ENCODE measurements at regions of chr6 and their contacts with region 1.

Region 1: GRCh38 chr6:136792410-136793262 is at the start of gene MAP3K5:
- DNase-seq: peak; percentile 92 to 98 (median 95)
- ATAC-seq: peak; percentile 80
- H3K4me3 ChIP-seq: peak within 1 kb of the TSS; percentile 98 to 99
- H3K4me3 Mint-ChIP-seq: peak within 1 kb of the TSS; percentile 94
- H3K27ac ChIP-seq: peak within 1 kb of the TSS; percentile 92 to 96
- H3K27ac Mint-ChIP-seq: peak within 1 kb of the TSS; percentile 96
- H3K4me1 ChIP-seq: peaks cover 36% of the 10 kb centered on the region
- H3K4me1 Mint-ChIP-seq: peaks cover 39% of the 10 kb centered on the region
- H3K27me3 ChIP-seq: no peaks in the 10 kb centered on the region
- H3K27me3 Mint-ChIP-seq: no peaks in the 10 kb centered on the region
- CTCF ChIP-seq: peak; percentile 72
- total RNA-seq, gene MAP3K5: 11.1 to 11.3 TPM

Region 2: DNA sequence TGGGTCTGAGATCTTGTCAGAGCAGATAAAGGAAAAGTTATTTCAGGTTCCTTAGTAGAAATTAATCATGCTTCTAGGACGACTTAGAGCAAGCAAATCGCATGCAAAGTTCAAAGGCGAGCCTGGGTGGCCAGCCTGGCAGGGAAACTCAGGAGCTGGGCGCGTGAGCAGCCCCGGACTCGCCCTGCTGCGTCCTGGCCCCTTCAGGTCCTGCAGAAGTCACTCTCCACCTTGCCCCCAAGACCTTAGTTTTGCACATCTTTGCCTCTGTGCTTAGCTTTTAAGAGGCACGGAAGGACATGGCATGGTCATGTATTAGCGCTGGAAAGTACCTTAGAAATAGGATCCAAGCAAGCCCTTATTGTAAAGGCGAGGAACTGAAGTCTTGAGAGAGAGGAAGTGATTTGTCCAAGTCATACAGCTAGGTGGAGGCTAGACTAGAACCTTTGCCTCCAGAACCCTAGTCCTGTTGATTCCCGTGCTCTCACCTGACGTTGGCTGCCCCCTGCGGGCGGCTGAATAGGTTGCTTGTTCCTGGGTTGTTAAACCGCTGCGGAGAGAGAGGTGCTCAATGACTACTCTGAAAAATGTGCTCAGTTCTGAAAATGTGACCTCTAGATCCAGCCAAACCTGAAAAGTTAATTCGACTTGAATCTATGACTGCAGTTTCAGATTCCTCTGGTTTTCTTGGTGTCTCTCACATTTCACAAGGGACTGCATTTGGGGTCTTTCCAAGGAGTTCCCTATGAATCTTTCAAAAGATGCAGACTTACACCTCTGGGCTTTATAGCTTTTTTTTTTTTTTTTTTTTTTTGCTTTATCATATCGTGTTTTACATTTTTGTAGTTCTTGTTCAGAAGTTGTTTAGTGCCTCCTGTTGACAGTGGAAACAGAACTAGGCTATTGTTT is 1608.8 kb before region 1 on chr6:
- CTCF ChIA-PET with region 1: no interaction called
- POLR2A ChIA-PET with region 1: no interaction called
- intact Hi-C with region 1: loop called in 1 of 2 experiments (anchors 5 kb)
- DNase-seq: peak; percentile 54 to 87 (median 75)
- ATAC-seq: peak; percentile 37
- H3K4me3 ChIP-seq: peak overlapping the region; percentile 52 to 58
- H3K4me3 Mint-ChIP-seq: peak overlapping the region; percentile 91
- H3K27ac ChIP-seq: peak overlapping the region in 1 of 2 experiments; percentile 41
- H3K27ac Mint-ChIP-seq: peak overlapping the region; percentile 84
- H3K4me1 ChIP-seq: peaks cover 9% of the 10 kb centered on the region
- H3K4me1 Mint-ChIP-seq: peaks cover 23% of the 10 kb centered on the region
- H3K27me3 ChIP-seq: no peaks in the 10 kb centered on the region
- H3K27me3 Mint-ChIP-seq: no peaks in the 10 kb centered on the region
- CTCF ChIP-seq: peak; percentile 70

Region 3: DNA sequence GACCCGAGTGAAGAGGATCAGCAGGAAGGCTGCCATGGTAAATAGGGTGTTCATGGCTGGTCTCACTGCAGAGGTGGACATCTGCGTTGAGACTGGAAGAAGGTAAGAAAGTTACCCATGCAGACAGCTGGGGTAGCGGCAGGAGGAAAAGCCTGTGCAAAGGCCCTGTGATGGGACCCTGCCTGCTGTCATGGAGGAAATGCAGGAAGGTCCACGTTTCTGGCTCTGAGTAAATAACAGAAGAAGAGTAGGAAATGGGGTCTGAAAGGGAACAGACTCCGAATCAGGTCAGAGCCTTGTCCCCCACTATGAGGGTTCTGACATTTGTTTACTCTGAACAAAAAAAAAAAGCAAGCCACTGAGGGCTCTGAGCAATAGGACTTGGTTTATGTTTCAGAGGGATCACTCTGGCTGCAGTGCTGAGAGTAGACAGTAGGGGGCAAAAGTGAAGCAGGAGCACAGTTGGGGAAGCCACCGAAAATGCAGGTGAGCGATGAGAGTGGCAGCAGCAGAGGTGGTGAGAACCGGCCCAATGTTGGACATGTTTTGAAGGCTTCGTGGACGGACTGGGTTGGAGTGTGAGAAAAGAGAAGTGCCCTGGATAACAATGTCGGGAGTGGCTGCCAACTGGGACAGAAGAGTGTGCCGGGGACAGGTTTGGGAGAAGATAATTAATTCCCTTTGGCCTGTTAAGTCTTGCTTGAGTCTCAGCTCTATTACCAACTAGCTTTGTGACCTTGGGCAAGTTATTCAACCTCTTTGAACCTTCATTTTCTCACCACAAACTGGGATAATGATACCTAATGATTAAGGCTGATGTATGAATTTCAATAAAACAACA is 184.5 kb before region 1 on chr6:
- CTCF ChIA-PET with region 1: interaction called, 12 read pairs
- POLR2A ChIA-PET with region 1: interaction called, 7 read pairs
- intact Hi-C with region 1: loop called (anchors 1 kb)
- DNase-seq: peak; percentile 63 to 81 (median 77)
- ATAC-seq: peak; percentile 100
- H3K4me3 ChIP-seq: no peak overlapping the region
- H3K4me3 Mint-ChIP-seq: no peak overlapping the region
- H3K27ac ChIP-seq: no peak overlapping the region
- H3K27ac Mint-ChIP-seq: no peak overlapping the region
- H3K4me1 ChIP-seq: no peaks in the 10 kb centered on the region
- H3K4me1 Mint-ChIP-seq: peaks cover 3% of the 10 kb centered on the region
- H3K27me3 ChIP-seq: no peaks in the 10 kb centered on the region
- H3K27me3 Mint-ChIP-seq: no peaks in the 10 kb centered on the region
- CTCF ChIP-seq: peak; percentile 81

Region 4: GRCh38 chr6:136657666-136658065 is 135.0 kb before region 1 on chr6:
- CTCF ChIA-PET with region 1: interaction called, 15 read pairs
- POLR2A ChIA-PET with region 1: interaction called, 4 read pairs
- intact Hi-C with region 1: no loop called
- DNase-seq: no peak
- ATAC-seq: no peak
- H3K4me3 ChIP-seq: no peak overlapping the region
- H3K4me3 Mint-ChIP-seq: no peak overlapping the region
- H3K27ac ChIP-seq: no peak overlapping the region
- H3K27ac Mint-ChIP-seq: peak overlapping the region; percentile 0
- H3K4me1 ChIP-seq: no peaks in the 10 kb centered on the region
- H3K4me1 Mint-ChIP-seq: no peaks in the 10 kb centered on the region
- H3K27me3 ChIP-seq: no peaks in the 10 kb centered on the region
- H3K27me3 Mint-ChIP-seq: no peaks in the 10 kb centered on the region
- CTCF ChIP-seq: no peak

Region 5: GRCh38 chr6:136723780-136724179 is 68.9 kb before region 1 on chr6:
- CTCF ChIA-PET with region 1: interaction called, 36 read pairs
- POLR2A ChIA-PET with region 1: interaction called, 6 read pairs
- intact Hi-C with region 1: no loop called
- DNase-seq: peak in 8 of 9 experiments; percentile 16 to 63 (median 48)
- ATAC-seq: peak; percentile 99
- H3K4me3 ChIP-seq: no peak overlapping the region
- H3K4me3 Mint-ChIP-seq: peak overlapping the region; percentile 19
- H3K27ac ChIP-seq: no peak overlapping the region
- H3K27ac Mint-ChIP-seq: peak overlapping the region; percentile 23
- H3K4me1 ChIP-seq: peaks cover 7% of the 10 kb centered on the region
- H3K4me1 Mint-ChIP-seq: peaks cover 32% of the 10 kb centered on the region
- H3K27me3 ChIP-seq: no peaks in the 10 kb centered on the region
- H3K27me3 Mint-ChIP-seq: no peaks in the 10 kb centered on the region
- CTCF ChIP-seq: no peak

Region 6: DNA sequence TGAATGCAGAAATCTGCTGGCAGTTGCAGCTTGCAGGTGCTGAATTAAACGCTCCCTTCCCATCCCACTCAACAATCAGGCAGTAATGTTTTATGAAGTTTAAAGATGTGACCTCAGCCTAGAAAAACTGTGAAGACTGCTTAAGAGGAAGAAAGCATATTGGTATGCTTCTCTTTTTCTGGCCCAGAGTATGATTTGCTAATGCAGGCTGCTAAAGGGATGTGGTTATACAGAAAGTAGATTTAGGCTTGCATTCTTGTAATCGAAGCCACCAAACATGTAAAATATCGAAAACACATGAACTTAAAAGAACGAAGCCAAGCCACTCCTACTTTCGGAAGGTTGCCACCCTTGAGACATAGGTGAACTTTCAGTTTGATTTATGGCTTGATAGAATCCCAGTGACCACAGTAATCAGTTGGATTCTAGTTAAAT is 41.1 kb before region 1 on chr6:
- CTCF ChIA-PET with region 1: interaction called, 26 read pairs
- POLR2A ChIA-PET with region 1: interaction called, 23 read pairs
- intact Hi-C with region 1: loop called (anchors 1 to 2 kb)
- DNase-seq: peak in 4 of 9 experiments; percentile 16 to 71 (median 39)
- ATAC-seq: peak; percentile 39
- H3K4me3 ChIP-seq: peak overlapping the region; percentile 11 to 31
- H3K4me3 Mint-ChIP-seq: peak overlapping the region; percentile 54
- H3K27ac ChIP-seq: peak overlapping the region; percentile 19 to 55
- H3K27ac Mint-ChIP-seq: peak overlapping the region; percentile 86
- H3K4me1 ChIP-seq: peaks cover 46% of the 10 kb centered on the region
- H3K4me1 Mint-ChIP-seq: peaks cover 77% of the 10 kb centered on the region
- H3K27me3 ChIP-seq: no peaks in the 10 kb centered on the region
- H3K27me3 Mint-ChIP-seq: no peaks in the 10 kb centered on the region
- CTCF ChIP-seq: no peak

Region 7: GRCh38 chr6:136822376-136823127 is 29.9 kb after region 1 on chr6 and contains the start of gene PEX7:
- CTCF ChIA-PET with region 1: interaction called, 9 read pairs
- POLR2A ChIA-PET with region 1: interaction called, 31 read pairs
- intact Hi-C with region 1: loop called (anchors 1 kb)
- DNase-seq: peak; percentile 76 to 94 (median 84)
- ATAC-seq: peak; percentile 91
- H3K4me3 ChIP-seq: peak within 1 kb of the TSS; percentile 57 to 77
- H3K4me3 Mint-ChIP-seq: peak within 1 kb of the TSS; percentile 93
- H3K27ac ChIP-seq: peak within 1 kb of the TSS; percentile 70 to 82
- H3K27ac Mint-ChIP-seq: peak within 1 kb of the TSS; percentile 95
- H3K4me1 ChIP-seq: peaks cover 14% of the 10 kb centered on the region
- H3K4me1 Mint-ChIP-seq: peaks cover 30% of the 10 kb centered on the region
- H3K27me3 ChIP-seq: no peaks in the 10 kb centered on the region
- H3K27me3 Mint-ChIP-seq: peaks cover 3% of the 10 kb centered on the region
- CTCF ChIP-seq: peak; percentile 68
- total RNA-seq, gene PEX7: 2.6 to 2.8 TPM

Region 8: DNA sequence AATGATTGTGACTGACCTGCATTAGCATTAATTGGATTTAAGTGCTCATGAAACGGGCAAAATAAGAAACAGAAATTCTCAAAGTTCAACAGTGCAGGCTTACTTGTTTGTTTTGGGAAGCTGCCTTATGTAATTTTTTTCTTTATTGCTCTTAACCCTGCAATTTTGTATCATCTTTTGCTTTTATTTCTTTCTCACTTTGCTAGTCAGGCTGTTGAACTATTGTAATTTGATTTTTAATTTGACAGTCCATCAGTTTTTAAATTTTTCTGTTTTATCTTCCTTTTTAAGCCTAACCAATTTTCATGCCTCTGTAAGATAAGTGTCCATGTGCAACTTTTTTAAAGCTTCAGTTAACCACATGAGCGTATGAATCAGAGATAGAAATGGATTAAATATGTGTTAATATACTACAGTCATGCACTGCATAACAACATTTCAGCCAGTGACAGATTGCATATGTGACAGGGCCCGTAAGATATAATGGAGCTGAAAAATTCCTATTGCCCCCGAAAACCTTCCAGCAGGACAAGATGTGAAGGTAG is 74.3 kb after region 1 on chr6:
- CTCF ChIA-PET with region 1: no interaction called
- POLR2A ChIA-PET with region 1: no interaction called
- intact Hi-C with region 1: no loop called
- DNase-seq: no peak
- ATAC-seq: no peak
- H3K4me3 ChIP-seq: no peak overlapping the region
- H3K4me3 Mint-ChIP-seq: no peak overlapping the region
- H3K27ac ChIP-seq: no peak overlapping the region
- H3K27ac Mint-ChIP-seq: no peak overlapping the region
- H3K4me1 ChIP-seq: no peaks in the 10 kb centered on the region
- H3K4me1 Mint-ChIP-seq: no peaks in the 10 kb centered on the region
- H3K27me3 ChIP-seq: no peaks in the 10 kb centered on the region
- H3K27me3 Mint-ChIP-seq: no peaks in the 10 kb centered on the region
- CTCF ChIP-seq: no peak

Region 9: DNA sequence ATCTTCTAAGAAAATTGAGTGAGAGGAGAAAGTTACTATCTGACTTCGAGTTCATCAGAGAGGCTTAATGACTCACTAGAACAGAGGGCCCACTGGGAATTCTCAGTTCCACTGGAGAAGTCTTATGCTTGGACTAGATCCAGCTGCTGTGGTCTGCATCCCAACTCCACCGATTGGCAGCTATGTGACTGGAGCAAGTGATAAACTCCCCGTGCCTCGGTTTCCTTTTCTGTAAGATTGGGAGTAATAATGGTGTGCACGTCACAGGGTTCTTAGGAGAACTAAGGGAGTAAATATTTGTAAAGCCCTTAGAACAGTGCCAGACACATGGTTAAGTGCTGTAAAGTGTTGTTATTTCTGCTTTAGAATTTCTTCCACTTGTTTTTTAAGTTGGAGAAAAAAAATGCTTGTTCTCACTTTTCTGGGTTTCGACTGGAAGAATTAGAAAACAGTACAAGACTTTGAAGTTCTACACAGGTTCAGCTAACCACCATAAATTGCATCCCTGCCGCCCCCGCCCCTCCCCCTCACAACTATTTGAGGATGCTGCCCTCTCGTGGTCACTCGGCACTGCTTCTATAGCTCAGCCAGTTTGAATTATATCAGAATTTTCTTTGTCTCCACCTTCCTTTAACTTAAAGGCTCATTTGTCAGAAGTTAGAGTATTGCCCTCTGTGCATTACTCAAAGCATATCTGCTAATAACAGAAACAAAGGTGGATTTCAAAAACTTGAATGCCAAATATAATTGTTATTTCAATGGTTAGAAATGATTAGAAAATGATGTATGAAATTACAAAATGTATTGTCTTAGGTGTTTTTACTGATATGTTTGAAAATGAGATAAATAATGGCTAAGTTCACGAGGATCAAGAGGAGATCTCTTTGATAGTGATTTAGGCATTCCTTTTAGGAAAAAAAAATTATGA is 521.6 kb after region 1 on chr6:
- CTCF ChIA-PET with region 1: no interaction called
- POLR2A ChIA-PET with region 1: no interaction called
- intact Hi-C with region 1: no loop called
- DNase-seq: peak; percentile 43 to 84 (median 73)
- ATAC-seq: peak; percentile 73
- H3K4me3 ChIP-seq: no peak overlapping the region
- H3K4me3 Mint-ChIP-seq: no peak overlapping the region
- H3K27ac ChIP-seq: no peak overlapping the region
- H3K27ac Mint-ChIP-seq: no peak overlapping the region
- H3K4me1 ChIP-seq: no peaks in the 10 kb centered on the region
- H3K4me1 Mint-ChIP-seq: peaks cover 8% of the 10 kb centered on the region
- H3K27me3 ChIP-seq: no peaks in the 10 kb centered on the region
- H3K27me3 Mint-ChIP-seq: no peaks in the 10 kb centered on the region
- CTCF ChIP-seq: peak; percentile 73

Region 10: GRCh38 chr6:138155443-138155842 is 1362.8 kb after region 1 on chr6:
- CTCF ChIA-PET with region 1: no interaction called
- POLR2A ChIA-PET with region 1: no interaction called
- intact Hi-C with region 1: no loop called
- DNase-seq: no peak
- ATAC-seq: no peak
- H3K4me3 ChIP-seq: no peak overlapping the region
- H3K4me3 Mint-ChIP-seq: no peak overlapping the region
- H3K27ac ChIP-seq: no peak overlapping the region
- H3K27ac Mint-ChIP-seq: no peak overlapping the region
- H3K4me1 ChIP-seq: no peaks in the 10 kb centered on the region
- H3K4me1 Mint-ChIP-seq: no peaks in the 10 kb centered on the region
- H3K27me3 ChIP-seq: peaks cover 3% of the 10 kb centered on the region in 2 experiments
- H3K27me3 Mint-ChIP-seq: peaks cover 36% of the 10 kb centered on the region
- CTCF ChIP-seq: no peak